ENCODE measurements at regions of chr9 and their contacts with region 1.

Region 1: DNA sequence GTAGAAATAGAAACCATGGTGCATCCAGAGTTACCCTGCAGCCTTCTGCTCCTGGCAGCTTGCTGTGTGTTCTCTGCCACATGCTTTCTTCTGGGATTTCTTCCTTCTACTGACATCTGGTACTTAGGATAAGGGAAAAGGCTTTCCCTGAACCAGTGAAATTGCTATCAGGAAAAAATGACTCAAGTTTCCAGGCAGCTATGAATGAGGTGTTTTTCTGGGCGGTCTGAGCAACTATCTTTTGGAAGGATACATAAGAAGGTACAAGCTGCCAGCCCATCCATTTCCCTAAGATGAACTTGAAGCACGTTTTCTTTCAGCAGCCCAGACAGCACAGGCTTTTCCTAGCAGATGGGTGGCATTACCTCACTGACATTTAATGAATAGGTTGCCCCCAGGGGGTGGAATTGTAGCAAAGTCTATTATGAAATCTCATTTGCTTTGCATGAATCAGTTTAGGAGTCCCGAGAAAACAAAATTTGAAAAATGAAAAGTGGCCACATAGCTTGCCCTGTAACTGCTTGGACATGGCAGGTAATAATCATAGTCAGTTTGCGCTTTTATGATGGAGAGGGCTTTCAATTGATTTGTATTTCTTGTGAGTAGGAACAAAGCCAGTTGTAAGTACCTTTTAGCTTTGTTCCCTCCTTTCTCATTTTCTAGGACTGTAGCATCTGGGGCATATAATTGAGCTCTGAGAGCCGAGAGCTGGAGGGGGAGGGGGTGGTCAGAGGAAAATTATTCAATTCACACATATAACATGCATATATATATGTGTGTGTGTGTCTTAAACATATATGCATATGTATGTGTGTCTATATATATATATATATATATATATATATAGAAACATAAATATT is 108.5 kb downstream of the C9orf152 start:
- DNase-seq: no peak
- CTCF ChIP-seq: no peak

Region 2: DNA sequence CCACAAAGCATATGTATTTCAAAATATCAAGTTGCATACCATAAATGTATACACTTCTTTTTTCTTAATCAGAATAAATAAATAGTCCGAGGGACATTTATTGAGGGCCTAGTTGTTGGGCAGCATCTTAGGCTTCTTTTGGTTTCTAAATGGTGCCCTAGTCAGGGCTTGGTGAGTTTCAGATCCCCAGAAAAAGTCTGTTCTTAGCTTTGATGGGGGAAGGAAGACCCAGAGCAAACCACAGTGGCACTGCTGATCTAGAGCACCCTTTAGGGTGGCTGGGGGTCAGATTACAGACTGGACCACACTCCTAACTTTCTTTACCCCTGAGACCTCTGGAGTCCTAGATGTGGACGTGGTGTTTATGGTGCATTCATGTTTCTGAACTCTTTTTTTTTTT is 10.7 kb after region 1 on chr9:
- CTCF ChIA-PET with region 1: interaction called, 23 read pairs
- POLR2A ChIA-PET with region 1: no interaction called
- DNase-seq: peak; percentile 40
- CTCF ChIP-seq: no peak

Measured in GM10248 (cell line).